Activated CD4-positive, alpha-beta memory T cell treated with anti-CD3 and anti-CD28 coated beads, Interleukin-2, amount 10 ng/mL, durations not matched to agents 7 days and 5 days (primary cell): ENCODE measurements at regions of chr11 and their contacts with region 1.

Region 1: DNA sequence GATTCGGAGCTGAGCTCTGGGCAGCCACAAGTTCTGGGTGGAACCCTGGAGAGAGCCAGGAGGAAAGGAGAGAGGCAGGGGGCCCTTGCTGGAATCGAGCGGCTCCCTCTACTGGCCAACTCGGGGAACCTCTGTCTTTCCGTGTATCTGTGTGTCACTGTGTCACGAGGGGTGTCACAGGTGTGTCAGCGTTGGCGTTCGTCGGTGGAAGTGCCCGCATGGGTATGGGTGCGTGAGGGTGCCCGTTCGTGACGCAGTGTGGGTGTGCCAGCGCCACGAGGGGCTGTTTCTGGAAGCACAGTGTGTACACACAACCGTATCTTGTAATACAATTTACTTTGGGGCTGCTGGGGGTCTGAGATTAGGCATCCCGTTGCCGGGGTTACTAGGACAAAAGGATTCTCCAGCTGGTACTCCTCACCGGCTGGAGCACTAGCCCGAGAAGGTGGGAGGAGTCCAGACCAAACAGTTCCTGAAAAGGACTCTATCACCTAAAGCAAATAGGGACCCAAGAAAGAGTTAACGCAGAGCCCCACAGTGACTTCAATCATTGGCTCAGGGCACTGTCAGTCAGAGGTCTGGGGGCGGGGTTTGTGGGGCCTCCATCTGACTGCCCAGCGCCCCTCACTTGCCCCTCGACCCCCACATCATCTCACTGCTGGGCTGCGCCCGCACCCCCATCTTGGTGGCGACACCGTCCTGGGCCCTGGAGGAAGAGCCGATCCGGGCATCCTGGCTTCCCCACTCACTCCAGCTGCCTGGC is 2.6 kb upstream of the BCL9L start:
- DNase-seq: peak; percentile 91
- H3K4me3 Mint-ChIP-seq: peak overlapping the region; percentile 89
- H3K27ac Mint-ChIP-seq: peak overlapping the region; percentile 92
- H3K4me1 Mint-ChIP-seq: peaks cover 48% of the 10 kb centered on the region
- H3K27me3 Mint-ChIP-seq: peaks cover 2% of the 10 kb centered on the region

Region 2: GRCh38 chr11:118689851-118690552 is 238.3 kb before region 1 on chr11:
- CTCF ChIA-PET with region 1: interaction called, 18 read pairs
- POLR2A ChIA-PET with region 1: interaction called, 7 read pairs
- DNase-seq: peak; percentile 88
- H3K4me3 Mint-ChIP-seq: peak overlapping the region; percentile 55
- H3K27ac Mint-ChIP-seq: no peak overlapping the region
- H3K4me1 Mint-ChIP-seq: peaks cover 42% of the 10 kb centered on the region
- H3K27me3 Mint-ChIP-seq: peaks cover 20% of the 10 kb centered on the region

Region 3: DNA sequence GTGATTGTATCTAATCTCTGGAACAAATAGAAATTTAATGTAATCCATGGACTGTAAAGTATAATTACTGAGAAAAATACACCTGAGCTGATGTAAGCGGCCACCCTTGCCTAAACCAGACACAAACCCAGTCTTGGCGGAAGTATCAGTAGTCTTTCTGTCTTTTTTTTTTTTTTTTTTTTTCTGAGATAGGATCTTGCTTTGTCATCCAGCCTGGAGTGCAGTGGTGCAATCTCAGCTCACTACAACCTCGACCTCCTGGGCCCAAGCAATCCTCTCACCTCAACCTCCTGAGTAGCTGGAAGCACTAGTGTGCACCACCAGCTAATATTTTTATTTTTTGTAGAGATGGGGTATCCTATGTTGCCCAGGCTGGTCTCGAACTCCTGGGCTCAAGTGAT is 50.1 kb before region 1 on chr11:
- CTCF ChIA-PET with region 1: interaction called, 6 read pairs
- POLR2A ChIA-PET with region 1: interaction called, 14 read pairs
- DNase-seq: no peak
- H3K4me3 Mint-ChIP-seq: no peak overlapping the region
- H3K27ac Mint-ChIP-seq: peak overlapping the region; percentile 93
- H3K4me1 Mint-ChIP-seq: peaks cover 84% of the 10 kb centered on the region
- H3K27me3 Mint-ChIP-seq: peaks cover 1% of the 10 kb centered on the region

Region 4: GRCh38 chr11:118907051-118908042 is 20.9 kb before region 1 on chr11:
- CTCF ChIA-PET with region 1: interaction called, 270 read pairs
- POLR2A ChIA-PET with region 1: interaction called, 4 read pairs
- DNase-seq: peak; percentile 88
- H3K4me3 Mint-ChIP-seq: no peak overlapping the region
- H3K27ac Mint-ChIP-seq: peak overlapping the region; percentile 45
- H3K4me1 Mint-ChIP-seq: peaks cover 34% of the 10 kb centered on the region
- H3K27me3 Mint-ChIP-seq: no peaks in the 10 kb centered on the region

Region 5: GRCh38 chr11:118997627-118998387 is 69.5 kb after region 1 on chr11 and contains the start of gene CENATAC:
- CTCF ChIA-PET with region 1: no interaction called
- POLR2A ChIA-PET with region 1: interaction called, 16 read pairs
- DNase-seq: peak; percentile 98
- H3K4me3 Mint-ChIP-seq: peak within 1 kb of the TSS; percentile 99
- H3K27ac Mint-ChIP-seq: peak within 1 kb of the TSS; percentile 95
- H3K4me1 Mint-ChIP-seq: peaks cover 36% of the 10 kb centered on the region
- H3K27me3 Mint-ChIP-seq: no peaks in the 10 kb centered on the region
- total RNA-seq, gene CENATAC: 34.6 to 35.0 TPM